ENCODE measurements at regions of chr9 and their contacts with region 1.

Region 1: GRCh38 chr9:113446323-113446740 is 17.2 kb upstream of the RGS3 start:
- DNase-seq: peak; percentile 35
- ATAC-seq: peak; percentile 58
- H3K4me3 Mint-ChIP-seq: no peak overlapping the region
- H3K27ac Mint-ChIP-seq: peak overlapping the region; percentile 9
- H3K4me1 Mint-ChIP-seq: peaks cover 3% of the 10 kb centered on the region
- H3K27me3 Mint-ChIP-seq: no peaks in the 10 kb centered on the region
- CTCF ChIP-seq: peak; percentile 93

Region 2: GRCh38 chr9:113511856-113512761 is 65.8 kb after region 1 on chr9:
- CTCF ChIA-PET with region 1: interaction called, 11 read pairs
- POLR2A ChIA-PET with region 1: no interaction called
- intact Hi-C with region 1: loop called (anchors 2 kb)
- DNase-seq: peak; percentile 97
- ATAC-seq: peak; percentile 74
- H3K4me3 Mint-ChIP-seq: peak overlapping the region; percentile 55
- H3K27ac Mint-ChIP-seq: peak overlapping the region; percentile 97
- H3K4me1 Mint-ChIP-seq: peaks cover 66% of the 10 kb centered on the region
- H3K27me3 Mint-ChIP-seq: no peaks in the 10 kb centered on the region
- CTCF ChIP-seq: no peak

Region 3: GRCh38 chr9:113523421-113524236 is 77.3 kb after region 1 on chr9:
- CTCF ChIA-PET with region 1: interaction called, 15 read pairs
- POLR2A ChIA-PET with region 1: no interaction called
- intact Hi-C with region 1: no loop called
- DNase-seq: peak; percentile 88
- ATAC-seq: peak; percentile 52
- H3K4me3 Mint-ChIP-seq: peak overlapping the region; percentile 69
- H3K27ac Mint-ChIP-seq: peak overlapping the region; percentile 71
- H3K4me1 Mint-ChIP-seq: peaks cover 88% of the 10 kb centered on the region
- H3K27me3 Mint-ChIP-seq: no peaks in the 10 kb centered on the region
- CTCF ChIP-seq: no peak

Region 4: GRCh38 chr9:113578882-113579282 is 132.6 kb after region 1 on chr9:
- CTCF ChIA-PET with region 1: interaction called, 88 read pairs
- POLR2A ChIA-PET with region 1: interaction called, 3 read pairs
- intact Hi-C with region 1: loop called (anchors 2 kb)
- DNase-seq: peak; percentile 96
- ATAC-seq: peak; percentile 71
- H3K4me3 Mint-ChIP-seq: peak overlapping the region; percentile 85
- H3K27ac Mint-ChIP-seq: peak overlapping the region; percentile 95
- H3K4me1 Mint-ChIP-seq: peaks cover 83% of the 10 kb centered on the region
- H3K27me3 Mint-ChIP-seq: no peaks in the 10 kb centered on the region
- CTCF ChIP-seq: no peak

Region 5: DNA sequence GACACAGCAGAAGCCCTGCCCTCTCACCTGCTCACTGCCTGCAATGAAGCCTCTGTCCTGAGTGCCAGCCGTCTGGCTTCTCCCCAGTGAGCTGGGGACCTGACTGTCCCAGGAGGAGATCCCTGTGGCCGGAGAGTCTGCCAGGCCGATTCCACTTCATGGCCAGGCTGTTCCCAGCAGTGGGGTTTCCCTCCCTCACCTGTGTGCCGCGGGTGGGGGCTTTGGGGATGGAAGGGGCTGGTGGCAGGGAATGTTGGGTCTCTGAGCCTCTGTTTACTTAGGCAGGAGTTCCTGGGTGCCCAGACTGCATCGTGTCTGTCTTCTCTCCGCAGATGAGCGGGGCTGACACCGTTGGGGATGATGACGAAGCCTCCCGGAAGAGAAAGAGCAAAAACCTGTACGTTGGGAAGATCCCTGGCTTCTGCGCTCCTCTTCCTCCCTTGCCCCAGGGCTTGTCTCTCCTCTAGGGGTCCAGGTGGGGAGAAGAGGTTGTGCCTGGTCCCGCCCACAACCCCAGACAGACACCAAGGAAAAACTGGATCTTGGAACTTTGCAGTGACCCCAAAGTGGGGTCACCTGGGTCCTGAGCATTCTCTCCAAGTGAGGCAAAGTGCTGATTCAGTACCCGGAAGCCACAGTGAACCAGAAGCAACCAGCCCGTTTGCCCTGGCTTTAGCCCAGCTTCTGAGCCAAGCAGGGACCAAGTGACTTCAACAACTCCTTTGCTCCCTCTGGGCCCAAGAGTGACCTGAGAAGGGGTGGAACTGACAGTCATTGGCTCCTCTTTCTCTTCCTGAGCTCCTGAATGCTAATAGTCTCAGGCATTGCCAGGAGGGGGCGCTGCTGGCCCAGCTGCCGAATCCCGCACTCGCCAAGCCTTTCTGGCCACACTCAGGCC is 144.9 kb after region 1 on chr9:
- CTCF ChIA-PET with region 1: interaction called, 105 read pairs
- POLR2A ChIA-PET with region 1: no interaction called
- intact Hi-C with region 1: no loop called
- DNase-seq: peak; percentile 86
- ATAC-seq: peak; percentile 77
- H3K4me3 Mint-ChIP-seq: no peak overlapping the region
- H3K27ac Mint-ChIP-seq: peak overlapping the region; percentile 33
- H3K4me1 Mint-ChIP-seq: peaks cover 40% of the 10 kb centered on the region
- H3K27me3 Mint-ChIP-seq: no peaks in the 10 kb centered on the region
- CTCF ChIP-seq: peak; percentile 88

Region 6: DNA sequence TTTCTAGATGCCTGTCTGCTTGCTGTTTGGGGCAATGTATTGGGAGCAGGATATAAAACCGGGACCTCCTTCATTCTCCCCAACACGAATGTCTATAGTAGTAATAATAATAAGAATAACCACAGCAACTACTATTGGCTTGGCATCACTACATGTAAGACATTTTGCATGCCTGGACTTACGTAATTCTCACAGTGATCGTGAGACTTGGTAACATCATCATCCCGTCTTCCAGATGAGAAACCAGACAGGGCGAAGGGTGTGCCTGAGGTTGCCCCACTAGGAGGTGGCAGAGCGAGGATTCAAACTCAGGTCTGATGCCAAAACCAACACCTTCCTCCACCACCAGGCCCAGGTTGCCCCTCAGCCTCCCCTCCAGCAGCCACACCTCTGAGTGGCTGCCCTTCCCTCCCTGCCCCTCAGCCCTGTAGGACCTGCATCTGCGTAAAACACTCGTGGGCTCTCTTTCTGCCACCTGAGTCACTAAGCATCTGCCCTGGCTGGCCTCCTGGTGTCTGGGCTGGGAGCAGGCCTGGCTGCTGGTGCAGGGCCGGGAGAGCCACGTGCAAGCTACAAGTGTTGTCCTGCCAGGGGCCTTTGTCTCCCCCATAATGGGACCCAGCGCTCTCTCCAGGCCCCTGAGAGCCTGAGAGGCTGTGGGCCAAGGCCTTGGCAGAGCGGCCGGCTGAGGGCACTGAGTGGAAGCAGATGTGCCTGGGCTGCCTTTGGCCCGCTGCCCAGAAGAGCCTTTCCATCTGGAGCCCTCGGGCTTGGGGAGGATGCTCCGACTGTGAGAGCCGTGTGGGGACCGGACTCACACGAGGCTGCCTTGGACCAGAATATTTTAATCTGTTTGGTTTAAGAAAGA is 202.5 kb after region 1 on chr9:
- CTCF ChIA-PET with region 1: interaction called, 193 read pairs
- POLR2A ChIA-PET with region 1: interaction called, 3 read pairs
- intact Hi-C with region 1: loop called (anchors 2 kb)
- DNase-seq: no peak
- ATAC-seq: no peak
- H3K4me3 Mint-ChIP-seq: no peak overlapping the region
- H3K27ac Mint-ChIP-seq: no peak overlapping the region
- H3K4me1 Mint-ChIP-seq: peaks cover 2% of the 10 kb centered on the region
- H3K27me3 Mint-ChIP-seq: peaks cover 3% of the 10 kb centered on the region
- CTCF ChIP-seq: no peak

Region 7: GRCh38 chr9:113669522-113670115 is 223.3 kb after region 1 on chr9:
- CTCF ChIA-PET with region 1: interaction called, 10 read pairs
- POLR2A ChIA-PET with region 1: no interaction called
- intact Hi-C with region 1: no loop called
- DNase-seq: no peak
- ATAC-seq: no peak
- H3K4me3 Mint-ChIP-seq: no peak overlapping the region
- H3K27ac Mint-ChIP-seq: no peak overlapping the region
- H3K4me1 Mint-ChIP-seq: no peaks in the 10 kb centered on the region
- H3K27me3 Mint-ChIP-seq: peaks cover 4% of the 10 kb centered on the region
- CTCF ChIP-seq: no peak